ENCODE measurements at regions of chr12 and their contacts with region 1.

Region 1: DNA sequence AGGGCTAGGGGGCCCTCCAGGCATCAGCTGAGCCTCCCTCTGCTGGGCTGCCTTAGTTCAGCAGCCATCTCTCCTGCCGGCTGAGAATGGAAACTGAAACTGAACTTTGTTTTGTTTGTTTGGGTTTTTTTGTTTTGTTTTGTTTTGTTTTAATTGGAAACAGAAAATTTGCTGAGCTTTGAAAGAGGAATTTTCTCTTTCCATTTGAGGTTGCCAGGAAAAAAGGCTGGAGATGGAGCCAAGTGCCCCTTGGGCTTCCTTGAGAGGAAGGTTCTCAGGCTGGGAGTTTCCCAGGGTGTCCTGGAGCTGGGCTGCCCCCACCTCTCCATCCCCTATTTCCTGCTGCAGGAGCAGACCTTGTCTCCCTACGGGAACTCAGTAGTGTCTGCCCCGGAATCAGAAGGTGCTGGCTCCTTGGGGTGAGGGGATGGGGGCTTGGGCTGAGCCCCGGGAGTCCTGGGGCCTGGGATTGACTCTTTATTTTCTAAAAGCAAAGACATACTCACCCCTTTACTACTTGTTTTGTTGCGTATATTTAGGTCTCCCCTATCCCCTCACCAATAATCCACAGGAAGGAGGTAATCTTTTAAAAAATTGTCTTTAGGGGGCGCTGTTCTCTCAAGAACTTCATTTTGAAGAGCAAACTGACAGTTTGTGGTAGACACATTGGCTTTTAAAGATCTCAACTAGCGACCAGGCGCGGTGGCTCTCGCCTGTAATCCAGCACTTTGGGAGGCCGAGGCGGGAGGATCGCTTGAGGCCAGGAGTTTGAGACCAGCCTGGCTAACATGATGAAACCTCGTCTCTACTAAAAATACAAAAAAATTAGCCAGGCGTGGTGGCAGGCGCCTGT is 21.3 kb upstream of the OASL start:
- DNase-seq: peak; percentile 62
- H3K4me3 Mint-ChIP-seq: peak overlapping the region; percentile 77
- H3K27ac Mint-ChIP-seq: peak overlapping the region; percentile 96
- H3K4me1 Mint-ChIP-seq: peaks cover 15% of the 10 kb centered on the region
- H3K27me3 Mint-ChIP-seq: no peaks in the 10 kb centered on the region

Region 2: DNA sequence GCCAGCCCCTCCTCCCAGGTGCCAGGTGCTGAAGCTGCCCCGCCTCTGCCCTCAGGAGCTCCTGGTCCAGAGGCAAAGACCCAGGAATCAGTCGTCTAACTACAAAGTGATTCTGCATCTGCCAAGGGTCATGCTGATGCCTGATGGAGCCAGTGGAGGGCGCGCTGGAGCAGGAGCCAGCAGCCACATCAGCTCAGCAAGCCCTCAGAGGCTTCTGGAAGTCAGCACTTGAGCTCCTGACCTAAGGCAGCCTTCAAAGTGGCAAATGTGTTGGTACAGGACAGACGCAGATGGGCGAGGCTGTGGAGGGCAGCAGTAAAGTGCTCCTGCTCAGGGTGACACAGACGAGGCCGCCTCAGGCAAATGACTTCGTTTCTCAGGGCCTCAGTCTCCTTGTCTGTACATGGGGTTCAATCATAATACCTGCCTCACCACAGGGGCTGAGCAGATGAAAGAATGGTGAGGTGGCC is 55.0 kb before region 1 on chr12:
- intact Hi-C with region 1: loop called (anchors 1 kb)
- DNase-seq: peak; percentile 41
- H3K4me3 Mint-ChIP-seq: no peak overlapping the region
- H3K27ac Mint-ChIP-seq: peak overlapping the region; percentile 25
- H3K4me1 Mint-ChIP-seq: peaks cover 3% of the 10 kb centered on the region
- H3K27me3 Mint-ChIP-seq: no peaks in the 10 kb centered on the region

Region 3: GRCh38 chr12:121015825-121016766 is 44.3 kb before region 1 on chr12 and contains the start of gene C12orf43:
- intact Hi-C with region 1: loop called (anchors 1 kb)
- DNase-seq: peak; percentile 90
- H3K4me3 Mint-ChIP-seq: peak within 1 kb of the TSS; percentile 100
- H3K27ac Mint-ChIP-seq: peak within 1 kb of the TSS; percentile 98
- H3K4me1 Mint-ChIP-seq: peaks cover 10% of the 10 kb centered on the region
- H3K27me3 Mint-ChIP-seq: no peaks in the 10 kb centered on the region
- total RNA-seq, gene C12orf43: 26.3 and 30.3 TPM in 2 replicates

Region 4: GRCh38 chr12:121033625-121034349 is 26.6 kb before region 1 on chr12:
- intact Hi-C with region 1: loop called (anchors 1 kb)
- DNase-seq: peak; percentile 44
- H3K4me3 Mint-ChIP-seq: no peak overlapping the region
- H3K27ac Mint-ChIP-seq: peak overlapping the region; percentile 80
- H3K4me1 Mint-ChIP-seq: peaks cover 49% of the 10 kb centered on the region
- H3K27me3 Mint-ChIP-seq: no peaks in the 10 kb centered on the region

Region 5: GRCh38 chr12:121079736-121080272 is 19.4 kb after region 1 on chr12:
- intact Hi-C with region 1: no loop called
- DNase-seq: no peak
- H3K4me3 Mint-ChIP-seq: no peak overlapping the region
- H3K27ac Mint-ChIP-seq: no peak overlapping the region
- H3K4me1 Mint-ChIP-seq: no peaks in the 10 kb centered on the region
- H3K27me3 Mint-ChIP-seq: peaks cover 12% of the 10 kb centered on the region

Region 6: GRCh38 chr12:121095544-121096198 is 35.3 kb after region 1 on chr12:
- intact Hi-C with region 1: loop called (anchors 1 kb)
- DNase-seq: peak; percentile 70
- H3K4me3 Mint-ChIP-seq: peak overlapping the region; percentile 78
- H3K27ac Mint-ChIP-seq: peak overlapping the region; percentile 63
- H3K4me1 Mint-ChIP-seq: peaks cover 28% of the 10 kb centered on the region
- H3K27me3 Mint-ChIP-seq: peaks cover 7% of the 10 kb centered on the region

Region 7: GRCh38 chr12:121110211-121110940 is 50.0 kb after region 1 on chr12:
- intact Hi-C with region 1: loop called (anchors 1 kb)
- DNase-seq: peak; percentile 47
- H3K4me3 Mint-ChIP-seq: no peak overlapping the region
- H3K27ac Mint-ChIP-seq: no peak overlapping the region
- H3K4me1 Mint-ChIP-seq: peaks cover 3% of the 10 kb centered on the region
- H3K27me3 Mint-ChIP-seq: no peaks in the 10 kb centered on the region

Region 8: GRCh38 chr12:121223292-121224285 is 163.2 kb after region 1 on chr12:
- intact Hi-C with region 1: loop called (anchors 10 kb)
- DNase-seq: peak; percentile 46
- H3K4me3 Mint-ChIP-seq: peak overlapping the region; percentile 2
- H3K27ac Mint-ChIP-seq: peak overlapping the region; percentile 84
- H3K4me1 Mint-ChIP-seq: peaks cover 32% of the 10 kb centered on the region
- H3K27me3 Mint-ChIP-seq: no peaks in the 10 kb centered on the region